PC-9 (cell line): ENCODE measurements at regions of chr18 and their contacts with region 1.

Region 1: DNA sequence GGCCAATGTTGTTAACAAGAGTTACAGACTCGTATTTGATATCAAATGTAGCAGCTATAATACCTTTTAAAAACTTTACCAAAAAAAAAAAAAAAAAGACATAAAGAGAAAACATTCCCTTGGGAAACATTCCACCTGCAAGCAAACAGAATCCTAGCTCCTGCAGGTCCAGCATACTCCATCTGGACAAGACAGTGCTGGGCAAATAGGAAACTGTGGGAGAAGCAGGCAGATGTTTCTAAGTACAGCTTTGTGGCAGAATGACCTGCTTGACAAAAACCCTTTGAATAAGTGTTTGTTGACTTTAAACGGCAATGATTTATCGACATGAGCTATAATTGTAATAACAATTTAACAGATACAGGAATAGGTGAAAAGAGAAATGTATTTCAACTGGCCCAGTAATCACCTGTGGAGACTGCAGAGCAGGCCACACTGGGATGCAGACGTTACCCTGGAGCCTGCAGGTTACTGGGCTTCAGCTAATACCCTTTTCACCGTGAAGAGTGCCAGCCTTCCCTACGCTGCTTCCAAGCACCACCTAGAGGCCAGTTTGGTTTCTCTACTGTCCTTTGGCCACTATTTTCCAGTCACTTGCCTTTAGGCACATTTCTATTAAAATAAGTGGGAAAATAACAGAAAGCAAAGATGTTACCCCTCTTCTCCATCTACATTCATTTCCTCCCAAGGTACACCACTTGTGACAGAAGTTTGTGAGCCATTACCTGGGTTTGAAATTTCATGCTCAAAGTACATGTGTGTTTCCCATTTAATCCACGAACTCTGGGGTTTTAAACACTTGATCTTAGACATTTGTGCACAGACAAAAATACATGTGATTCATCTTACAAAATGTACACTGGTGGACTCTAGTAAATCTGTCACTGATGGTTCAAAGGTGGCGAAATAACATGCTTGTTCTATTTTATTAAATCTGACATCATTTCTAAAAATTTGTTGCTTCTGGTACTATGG is 96.9 kb upstream of the ZNF397 start:
- DNase-seq: peak in 1 of 2 experiments; percentile 31
- H3K4me3 ChIP-seq: no peak overlapping the region
- H3K27ac ChIP-seq: no peak overlapping the region
- H3K4me1 ChIP-seq: no peaks in the 10 kb centered on the region
- H3K27me3 ChIP-seq: no peaks in the 10 kb centered on the region
- CTCF ChIP-seq: peak; percentile 67

Region 2: GRCh38 chr18:34867520-34867919 is 276.4 kb before region 1 on chr18:
- CTCF ChIA-PET with region 1: no interaction called
- POLR2A ChIA-PET with region 1: interaction called, 4 read pairs
- intact Hi-C with region 1: loop called (anchors 2 kb)
- DNase-seq: no peak
- H3K4me3 ChIP-seq: no peak overlapping the region
- H3K27ac ChIP-seq: no peak overlapping the region
- H3K4me1 ChIP-seq: no peaks in the 10 kb centered on the region
- H3K27me3 ChIP-seq: no peaks in the 10 kb centered on the region
- CTCF ChIP-seq: no peak

Region 3: DNA sequence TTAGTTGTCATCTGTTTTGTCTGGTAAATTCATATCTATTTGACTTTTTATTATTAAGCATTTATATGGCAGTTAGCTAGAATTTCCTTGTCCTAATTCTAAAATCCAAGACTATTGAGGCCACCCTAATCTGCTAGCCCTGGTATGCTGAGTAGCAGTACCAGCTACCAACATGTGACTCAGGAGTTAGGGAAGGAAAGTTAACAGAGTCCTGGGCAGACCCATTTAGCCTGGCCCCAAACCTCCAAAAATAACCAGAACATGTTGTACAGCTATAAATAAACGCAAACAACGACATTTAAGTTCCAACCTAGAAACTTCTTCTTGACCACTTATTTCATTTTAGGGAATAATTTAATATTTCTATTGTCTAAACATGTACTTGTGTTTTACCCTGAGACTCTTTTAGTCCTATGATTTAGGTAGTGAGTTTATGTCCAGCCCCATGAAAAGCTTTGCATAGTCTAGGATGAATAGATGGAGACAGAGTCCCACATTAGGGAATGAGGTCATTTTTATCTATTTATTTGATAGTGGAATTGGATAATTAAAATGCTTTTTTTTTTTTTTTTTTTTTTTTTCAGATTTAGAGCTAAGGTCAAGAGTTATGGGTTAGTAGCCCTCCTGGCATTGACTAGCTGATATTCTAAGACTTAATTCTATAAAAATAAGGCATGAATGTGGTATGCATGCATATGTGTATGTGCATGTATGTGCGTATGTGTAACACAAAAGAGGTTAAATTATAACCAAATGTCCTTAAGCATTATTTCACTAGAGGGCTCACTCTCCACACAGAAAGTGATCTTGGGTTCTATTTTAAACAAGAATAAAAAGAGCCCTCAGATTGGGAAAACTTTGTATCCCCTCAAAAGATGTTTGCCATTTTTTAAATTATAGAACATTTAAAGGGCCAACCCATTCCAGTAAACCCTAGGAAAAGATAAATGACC is 262.8 kb before region 1 on chr18:
- CTCF ChIA-PET with region 1: no interaction called
- POLR2A ChIA-PET with region 1: no interaction called
- intact Hi-C with region 1: loop called (anchors 5 kb)
- DNase-seq: no peak
- H3K4me3 ChIP-seq: no peak overlapping the region
- H3K27ac ChIP-seq: no peak overlapping the region
- H3K4me1 ChIP-seq: no peaks in the 10 kb centered on the region
- H3K27me3 ChIP-seq: no peaks in the 10 kb centered on the region
- CTCF ChIP-seq: peak; percentile 35

Region 4: GRCh38 chr18:35005963-35006577 is 137.8 kb before region 1 on chr18:
- CTCF ChIA-PET with region 1: interaction called, 9 read pairs
- POLR2A ChIA-PET with region 1: no interaction called
- intact Hi-C with region 1: loop called (anchors 1 kb)
- DNase-seq: peak; percentile 6 to 32
- H3K4me3 ChIP-seq: no peak overlapping the region
- H3K27ac ChIP-seq: no peak overlapping the region
- H3K4me1 ChIP-seq: no peaks in the 10 kb centered on the region
- H3K27me3 ChIP-seq: no peaks in the 10 kb centered on the region
- CTCF ChIP-seq: peak; percentile 61

Region 5: GRCh38 chr18:35478520-35479435 is 334.9 kb after region 1 on chr18:
- CTCF ChIA-PET with region 1: no interaction called
- POLR2A ChIA-PET with region 1: no interaction called
- intact Hi-C with region 1: no loop called
- DNase-seq: peak; percentile 43 to 93
- H3K4me3 ChIP-seq: peak overlapping the region; percentile 49
- H3K27ac ChIP-seq: peak overlapping the region; percentile 97
- H3K4me1 ChIP-seq: peaks cover 54% of the 10 kb centered on the region
- H3K27me3 ChIP-seq: no peaks in the 10 kb centered on the region
- CTCF ChIP-seq: no peak